HepG2 (cell line): ENCODE measurements at regions of chr15 and their contacts with region 1.

Region 1: DNA sequence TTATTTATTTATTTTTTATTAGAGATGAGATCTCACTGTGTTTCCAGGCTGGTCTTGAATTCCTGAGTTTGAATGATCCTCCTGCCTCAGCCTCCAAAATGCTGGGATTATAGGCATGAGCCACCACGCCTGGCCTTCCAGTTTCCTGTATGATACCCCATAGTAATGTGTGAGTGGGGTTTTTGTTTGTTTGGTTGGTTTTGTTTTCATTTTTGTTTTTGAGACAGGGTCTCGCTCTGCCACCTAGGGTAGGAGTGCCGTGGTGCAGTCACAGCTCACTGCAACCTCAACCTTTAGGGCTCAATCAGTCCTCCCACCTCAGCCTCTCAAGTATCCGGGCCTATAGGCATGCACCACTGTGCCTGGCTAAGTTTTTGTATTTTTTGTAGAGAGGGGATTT is 30.9 kb downstream of the GOLM2 start:
- DNase-seq: no peak
- ATAC-seq: no peak
- H3K4me3 ChIP-seq: no peak overlapping the region
- H3K27ac ChIP-seq: no peak overlapping the region
- H3K4me1 ChIP-seq: no peaks in the 10 kb centered on the region
- H3K27me3 ChIP-seq: no peaks in the 10 kb centered on the region
- CTCF ChIP-seq: no peak
- EP300 ChIP-seq: no peak
- POLR2A ChIP-seq: no peak
- RAD21 ChIP-seq: no peak

Region 2: GRCh38 chr15:44173813-44174212 is 145.6 kb before region 1 on chr15:
- CTCF ChIA-PET with region 1: no interaction called
- POLR2A ChIA-PET with region 1: no interaction called
- in situ Hi-C with region 1: no loop called
- intact Hi-C with region 1: no loop called
- DNase-seq: no peak
- ATAC-seq: no peak
- H3K4me3 ChIP-seq: no peak overlapping the region
- H3K27ac ChIP-seq: no peak overlapping the region
- H3K4me1 ChIP-seq: no peaks in the 10 kb centered on the region
- H3K27me3 ChIP-seq: 0 out of 5 replicates have a peak, but pooled peaks cover 0 to under 1% of the 10 kb centered on the region in 2 experiments
- CTCF ChIP-seq: no peak
- EP300 ChIP-seq: no peak
- POLR2A ChIP-seq: no peak
- RAD21 ChIP-seq: no peak

Region 3: DNA sequence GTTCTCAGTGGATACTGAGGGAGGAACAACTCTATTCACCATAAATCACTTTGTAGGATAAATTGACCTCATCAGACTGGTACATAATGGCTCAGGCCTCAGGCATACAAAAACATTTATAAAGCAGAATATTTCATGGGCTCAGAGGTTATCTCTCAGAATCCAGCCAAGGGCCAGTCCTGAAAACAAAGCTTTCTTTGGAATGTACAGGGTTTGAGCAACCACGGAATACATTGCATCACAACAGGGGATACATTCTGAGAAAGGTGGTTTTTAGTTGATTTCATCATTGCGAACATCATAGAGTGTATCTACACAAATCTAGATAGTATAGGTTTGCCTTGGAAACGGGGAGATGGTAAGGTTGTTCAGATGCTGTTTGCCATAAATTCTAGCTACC is 74.7 kb after region 1 on chr15:
- CTCF ChIA-PET with region 1: no interaction called
- POLR2A ChIA-PET with region 1: no interaction called
- in situ Hi-C with region 1: no loop called
- intact Hi-C with region 1: loop called (anchors 2 kb)
- DNase-seq: peak; percentile 43
- ATAC-seq: no peak; the same call in 1 of the 3 replicates
- H3K4me3 ChIP-seq: no peak overlapping the region
- H3K27ac ChIP-seq: no peak overlapping the region
- H3K4me1 ChIP-seq: peaks cover 13% of the 10 kb centered on the region
- H3K27me3 ChIP-seq: no peaks in the 10 kb centered on the region
- CTCF ChIP-seq: no peak
- EP300 ChIP-seq: no peak
- POLR2A ChIP-seq: no peak
- RAD21 ChIP-seq: no peak

Region 4: DNA sequence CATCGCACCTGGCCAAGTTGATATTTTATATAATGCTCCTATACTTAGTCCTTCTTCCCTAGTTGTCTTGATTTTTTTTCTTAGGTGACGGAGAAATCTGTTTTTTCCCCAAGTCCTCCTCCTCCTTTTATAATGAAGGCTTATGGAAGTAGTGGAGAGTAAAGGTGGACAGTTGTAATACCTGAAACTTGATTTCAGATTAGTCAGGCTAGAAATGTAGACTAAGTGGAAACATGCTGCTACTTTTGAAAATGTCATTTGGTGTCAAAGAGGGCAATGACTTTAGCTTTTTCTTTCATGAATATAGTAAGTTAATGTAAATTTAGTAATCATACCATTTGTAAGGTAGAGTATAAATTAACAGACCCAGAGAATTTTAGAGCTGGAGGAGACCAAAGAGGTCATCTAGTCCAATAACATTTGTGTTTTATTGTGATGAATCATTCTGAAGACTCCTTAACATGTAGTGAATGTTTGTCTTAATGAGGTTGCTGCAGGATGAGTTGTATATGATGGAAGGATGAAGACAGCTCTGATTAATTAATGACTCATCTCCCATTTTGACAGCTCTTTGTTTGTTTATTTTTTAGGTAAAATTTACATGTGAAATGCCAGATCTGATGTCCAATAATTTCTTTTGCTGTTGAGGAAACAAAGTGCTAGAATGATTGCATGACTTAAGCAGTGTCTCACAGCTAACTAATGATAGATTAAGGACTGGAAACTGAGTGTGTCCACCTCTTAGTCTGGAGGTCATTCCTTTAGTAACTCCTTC is 116.7 kb after region 1 on chr15:
- CTCF ChIA-PET with region 1: no interaction called
- POLR2A ChIA-PET with region 1: no interaction called
- in situ Hi-C with region 1: no loop called
- intact Hi-C with region 1: no loop called
- DNase-seq: no peak
- ATAC-seq: no peak
- H3K4me3 ChIP-seq: no peak overlapping the region
- H3K27ac ChIP-seq: no peak overlapping the region
- H3K4me1 ChIP-seq: peaks cover 4% of the 10 kb centered on the region; the same call in 1 of the 2 replicates
- H3K27me3 ChIP-seq: no peaks in the 10 kb centered on the region
- CTCF ChIP-seq: no peak
- EP300 ChIP-seq: no peak
- POLR2A ChIP-seq: no peak
- RAD21 ChIP-seq: no peak